ENCODE measurements at regions of chr22 and their contacts with region 1.

Region 1: GRCh38 chr22:42662114-42663021 is 13.2 kb upstream of the CYB5R3 start:
- DNase-seq: no peak
- H3K4me3 ChIP-seq: peak overlapping the region; percentile 64
- H3K27me3 ChIP-seq: no peaks in the 10 kb centered on the region
- CTCF ChIP-seq: peak; percentile 91

Region 2: GRCh38 chr22:42635531-42635930 is 26.8 kb before region 1 on chr22:
- CTCF ChIA-PET with region 1: no interaction called
- POLR2A ChIA-PET with region 1: no interaction called
- DNase-seq: peak; percentile 82
- H3K4me3 ChIP-seq: no peak overlapping the region
- H3K27me3 ChIP-seq: no peaks in the 10 kb centered on the region
- CTCF ChIP-seq: no peak

Region 3: DNA sequence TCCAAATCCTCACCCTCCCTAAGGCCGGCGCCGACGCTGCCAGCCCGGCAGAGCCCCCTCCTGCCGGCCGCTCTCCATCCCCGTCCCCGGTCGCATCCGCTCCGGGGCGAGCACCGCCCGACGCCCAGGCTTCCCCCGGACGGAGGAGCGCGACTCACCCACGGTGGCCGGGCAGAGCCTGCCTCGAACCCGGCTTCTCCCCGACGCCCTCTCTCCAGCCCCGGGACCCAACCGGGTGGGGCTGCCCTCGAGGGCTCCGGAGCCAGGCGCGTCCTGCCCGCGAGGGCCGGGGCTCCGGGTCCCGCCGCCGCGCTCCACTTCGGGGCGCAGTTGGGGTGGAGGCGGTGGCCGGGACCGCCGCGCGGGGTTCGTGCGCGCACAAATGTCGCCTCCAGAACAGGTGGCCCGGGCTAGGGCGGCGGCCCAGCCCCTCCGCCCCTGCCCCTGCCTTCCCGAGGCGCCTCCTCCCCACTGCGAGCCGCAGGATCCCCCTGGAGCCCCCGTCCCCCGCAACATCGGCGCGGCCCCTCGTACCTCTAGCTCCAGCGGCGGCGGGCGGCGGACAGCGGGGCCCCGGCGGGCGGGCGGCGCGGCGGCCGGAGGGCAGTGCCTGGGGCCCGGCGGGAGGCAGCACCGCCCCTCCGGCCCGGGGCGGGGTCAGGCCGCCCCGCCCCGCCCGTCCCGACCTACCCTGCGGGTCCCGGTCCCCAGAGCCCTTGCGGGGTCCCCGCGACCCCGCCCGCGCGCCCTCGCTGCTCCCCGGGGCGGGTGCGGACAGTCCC is 58.1 kb after region 1 on chr22 and contains the start of gene A4GALT:
- CTCF ChIA-PET with region 1: interaction called, 10 read pairs
- POLR2A ChIA-PET with region 1: no interaction called
- DNase-seq: no peak
- H3K4me3 ChIP-seq: peak within 1 kb of the TSS; percentile 74
- H3K27me3 ChIP-seq: no peaks in the 10 kb centered on the region
- CTCF ChIP-seq: no peak
- polyA plus RNA-seq, gene A4GALT: 3.1 and 6.7 TPM in 2 replicates

Measured in BJ (cell line).